Activated CD4-positive, alpha-beta T cell treated with anti-CD3 and anti-CD28 coated beads for 36 hours (primary cell): ENCODE measurements at regions of chr13 and their contacts with region 1.

Region 1: GRCh38 chr13:43094901-43095300 is 71.5 kb downstream of the DNAJC15 start:
- DNase-seq: no peak
- ATAC-seq: peak; percentile 93
- H3K4me3 Mint-ChIP-seq: no peak overlapping the region
- H3K27ac Mint-ChIP-seq: peak overlapping the region; percentile 64
- H3K4me1 Mint-ChIP-seq: peaks cover 24% of the 10 kb centered on the region
- H3K27me3 Mint-ChIP-seq: no peaks in the 10 kb centered on the region

Region 2: DNA sequence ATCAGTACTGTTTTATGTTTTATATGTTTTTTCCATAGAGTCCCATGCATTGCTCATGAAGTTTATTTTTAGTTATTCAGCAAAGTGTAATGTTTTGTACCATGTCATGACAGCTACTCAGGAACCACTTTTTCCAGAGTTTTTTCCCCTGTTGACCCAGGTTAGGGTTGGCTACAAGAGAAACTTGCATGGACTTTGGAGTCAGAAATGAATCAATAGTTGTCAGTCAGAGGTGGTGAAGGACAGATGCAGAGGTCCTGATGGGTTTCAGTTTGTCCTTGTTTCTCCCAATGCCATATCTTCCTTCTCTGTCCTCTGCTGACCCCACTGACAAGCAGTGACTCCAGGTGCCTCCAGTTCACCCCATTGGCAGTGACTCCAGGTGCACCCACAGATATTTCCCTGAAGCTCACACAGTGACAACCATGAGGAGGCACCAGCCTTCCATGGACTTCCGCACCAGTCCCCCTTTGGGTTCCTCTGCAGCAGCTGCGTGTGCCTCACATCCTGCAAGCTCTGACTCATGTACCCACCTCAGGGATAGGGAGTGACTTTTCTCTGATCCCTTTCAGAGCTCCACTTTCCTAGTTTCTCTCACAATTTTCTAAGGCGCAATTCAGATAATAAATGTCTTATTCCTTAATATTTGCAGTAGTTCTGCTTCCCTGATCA is 730.8 kb before region 1 on chr13:
- CTCF ChIA-PET with region 1: no interaction called
- POLR2A ChIA-PET with region 1: no interaction called
- intact Hi-C with region 1: no loop called
- DNase-seq: no peak
- ATAC-seq: no peak
- H3K4me3 Mint-ChIP-seq: no peak overlapping the region
- H3K27ac Mint-ChIP-seq: no peak overlapping the region
- H3K4me1 Mint-ChIP-seq: peaks cover 32% of the 10 kb centered on the region
- H3K27me3 Mint-ChIP-seq: no peaks in the 10 kb centered on the region

Region 3: DNA sequence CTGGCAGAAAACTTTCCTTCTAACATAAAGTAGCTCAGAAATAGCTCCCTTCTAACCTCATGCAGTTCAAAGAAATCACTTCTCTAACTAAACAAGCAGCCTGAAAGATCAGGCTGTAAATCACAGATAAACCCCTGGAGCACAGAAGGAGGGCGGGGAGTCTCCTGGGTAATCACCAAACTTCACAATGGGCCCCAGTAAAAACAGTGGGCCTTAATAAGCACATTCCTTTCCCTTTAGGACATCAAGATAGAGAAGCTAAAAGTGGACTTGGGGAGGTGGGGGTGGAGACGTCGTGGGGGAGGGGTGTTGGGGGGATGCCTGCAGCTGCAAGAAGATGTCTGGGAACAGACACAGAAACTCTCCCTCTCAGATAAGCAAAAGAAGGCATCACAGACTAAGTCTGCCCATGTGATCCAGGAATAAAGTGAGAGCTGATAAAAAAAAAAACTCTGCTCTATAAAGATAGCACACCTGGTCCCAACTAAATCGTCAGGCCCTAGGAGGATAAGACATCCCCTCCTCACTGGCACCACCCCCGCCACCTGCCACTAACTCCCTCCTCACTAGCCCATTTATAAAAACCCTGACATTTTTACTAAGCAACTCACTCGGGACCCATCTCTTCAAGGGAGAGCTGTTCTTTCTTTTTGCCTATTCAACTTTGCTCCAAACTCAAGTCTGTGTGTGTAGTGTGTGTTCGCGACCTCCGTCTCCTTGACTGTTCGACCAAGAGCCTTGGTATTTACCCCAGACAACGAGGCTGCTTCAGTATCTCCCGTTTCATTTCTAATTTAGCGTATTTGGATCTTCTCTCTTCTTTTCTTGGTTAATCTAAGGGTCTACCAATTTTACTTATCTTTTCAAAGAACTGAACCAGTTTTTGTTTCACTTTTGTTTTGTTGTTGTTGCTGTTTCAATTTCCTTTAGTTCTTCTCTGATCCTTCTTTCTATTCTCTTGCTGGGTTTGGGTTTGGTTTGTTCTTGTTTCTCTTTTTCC is 39.8 kb before region 1 on chr13:
- CTCF ChIA-PET with region 1: no interaction called
- POLR2A ChIA-PET with region 1: interaction called, 3 read pairs
- intact Hi-C with region 1: loop called in 1 of 2 experiments (anchors 5 kb)
- DNase-seq: peak; percentile 36
- ATAC-seq: peak; percentile 47
- H3K4me3 Mint-ChIP-seq: no peak overlapping the region
- H3K27ac Mint-ChIP-seq: no peak overlapping the region
- H3K4me1 Mint-ChIP-seq: peaks cover 36% of the 10 kb centered on the region
- H3K27me3 Mint-ChIP-seq: no peaks in the 10 kb centered on the region

Region 4: GRCh38 chr13:43797869-43798268 is 703.0 kb after region 1 on chr13:
- CTCF ChIA-PET with region 1: no interaction called
- POLR2A ChIA-PET with region 1: no interaction called
- intact Hi-C with region 1: loop called in 1 of 2 experiments (anchors 5 kb)
- DNase-seq: no peak
- ATAC-seq: no peak
- H3K4me3 Mint-ChIP-seq: no peak overlapping the region
- H3K27ac Mint-ChIP-seq: no peak overlapping the region
- H3K4me1 Mint-ChIP-seq: peaks cover 34% of the 10 kb centered on the region
- H3K27me3 Mint-ChIP-seq: peaks cover 31% of the 10 kb centered on the region